ENCODE measurements at regions of chr12 and their contacts with region 1.

Region 1: DNA sequence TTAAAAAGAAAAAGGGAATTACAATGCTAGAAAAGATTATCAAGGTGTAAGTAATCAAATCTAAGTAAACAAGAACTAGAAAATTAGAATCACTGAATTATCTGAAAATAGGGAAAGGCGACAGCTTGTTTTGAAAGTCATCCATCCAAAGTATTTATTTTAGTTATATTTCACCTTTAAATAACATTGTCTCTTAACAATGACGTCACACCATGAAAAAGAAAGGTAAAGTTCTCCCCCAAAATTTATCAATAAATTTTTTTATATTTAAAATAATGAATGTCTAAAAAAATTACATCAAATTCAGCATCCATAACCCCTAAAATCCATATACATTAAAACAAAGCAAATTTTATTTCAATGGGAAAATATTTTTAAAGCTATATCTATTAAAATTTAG is 223.2 kb downstream of the RERGL start:
- DNase-seq: no peak
- H3K4me3 Mint-ChIP-seq: no peak overlapping the region
- H3K27ac Mint-ChIP-seq: no peak overlapping the region
- H3K4me1 Mint-ChIP-seq: no peaks in the 10 kb centered on the region
- H3K27me3 Mint-ChIP-seq: no peaks in the 10 kb centered on the region

Region 2: DNA sequence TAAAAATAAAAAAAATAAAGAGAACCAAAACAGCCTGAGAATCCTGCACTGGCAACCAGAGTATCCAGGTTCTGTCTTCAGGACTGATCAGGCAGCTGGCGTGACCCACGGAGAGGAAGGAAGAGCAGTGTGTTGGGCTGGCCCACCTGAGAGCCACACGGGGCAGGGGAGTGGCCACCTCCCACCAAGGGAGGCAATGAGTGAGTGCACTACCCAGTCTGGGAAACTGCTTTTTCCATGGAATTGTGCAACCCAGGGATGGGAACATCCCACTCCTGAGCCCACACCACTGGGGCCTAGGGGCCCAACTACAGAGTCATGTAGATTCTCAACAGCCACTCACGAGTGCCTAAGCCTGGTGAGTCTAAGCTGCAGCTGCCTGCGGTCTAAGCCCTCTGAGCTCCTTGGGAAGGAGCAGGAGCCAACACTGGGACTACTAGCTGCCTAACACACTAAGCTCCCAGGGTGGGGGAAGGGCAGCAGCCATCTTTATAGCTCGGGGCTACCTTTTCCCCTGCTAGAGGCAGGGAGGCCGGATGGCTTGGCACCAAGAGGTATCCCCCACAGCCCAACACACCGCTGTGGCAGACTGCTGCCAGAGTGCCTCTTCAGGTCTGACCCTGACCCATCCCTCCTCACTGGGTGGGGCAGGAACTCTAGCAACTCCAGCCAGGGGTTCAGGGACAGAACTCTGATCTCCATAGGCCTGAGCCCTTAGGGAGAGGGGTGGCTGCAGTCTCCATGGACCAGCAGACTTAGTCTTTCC is 387.7 kb before region 1 on chr12:
- intact Hi-C with region 1: no loop called
- DNase-seq: no peak
- H3K4me3 Mint-ChIP-seq: no peak overlapping the region
- H3K27ac Mint-ChIP-seq: no peak overlapping the region
- H3K4me1 Mint-ChIP-seq: no peaks in the 10 kb centered on the region
- H3K27me3 Mint-ChIP-seq: no peaks in the 10 kb centered on the region

Region 3: GRCh38 chr12:17778242-17778641 is 88.6 kb before region 1 on chr12:
- intact Hi-C with region 1: loop called (anchors 2 kb)
- DNase-seq: no peak
- H3K4me3 Mint-ChIP-seq: no peak overlapping the region
- H3K27ac Mint-ChIP-seq: no peak overlapping the region
- H3K4me1 Mint-ChIP-seq: no peaks in the 10 kb centered on the region
- H3K27me3 Mint-ChIP-seq: no peaks in the 10 kb centered on the region

Region 4: DNA sequence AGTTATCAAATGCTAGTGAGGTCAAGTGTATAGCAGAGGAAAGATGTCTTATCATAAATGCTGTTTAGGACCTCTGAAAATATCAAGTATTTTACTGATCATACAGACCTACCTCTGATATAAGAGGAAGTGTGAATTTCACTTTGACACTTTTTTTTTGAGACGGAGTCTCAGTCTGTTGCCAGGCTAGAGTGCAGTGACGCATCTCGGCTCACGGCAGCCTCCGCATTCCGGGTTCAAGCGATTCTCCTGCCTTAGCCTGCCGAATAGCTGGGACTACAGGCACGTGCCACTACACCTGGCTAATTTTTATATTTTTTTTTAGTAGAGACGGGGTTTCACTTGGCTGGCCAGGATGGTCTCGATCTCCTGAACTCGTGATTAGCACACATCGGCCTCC is 339.4 kb after region 1 on chr12:
- intact Hi-C with region 1: no loop called
- DNase-seq: no peak
- H3K4me3 Mint-ChIP-seq: no peak overlapping the region
- H3K27ac Mint-ChIP-seq: no peak overlapping the region
- H3K4me1 Mint-ChIP-seq: no peaks in the 10 kb centered on the region
- H3K27me3 Mint-ChIP-seq: no peaks in the 10 kb centered on the region

Measured in activated CD4-positive, alpha-beta T cell treated with anti-CD3 and anti-CD28 coated beads, Interleukin-2, amount 10 ng/mL, durations not matched to agents 24 days and 14 days (primary cell).